H1 (cell line): ENCODE measurements at regions of chr15 and their contacts with region 1.

Region 1: DNA sequence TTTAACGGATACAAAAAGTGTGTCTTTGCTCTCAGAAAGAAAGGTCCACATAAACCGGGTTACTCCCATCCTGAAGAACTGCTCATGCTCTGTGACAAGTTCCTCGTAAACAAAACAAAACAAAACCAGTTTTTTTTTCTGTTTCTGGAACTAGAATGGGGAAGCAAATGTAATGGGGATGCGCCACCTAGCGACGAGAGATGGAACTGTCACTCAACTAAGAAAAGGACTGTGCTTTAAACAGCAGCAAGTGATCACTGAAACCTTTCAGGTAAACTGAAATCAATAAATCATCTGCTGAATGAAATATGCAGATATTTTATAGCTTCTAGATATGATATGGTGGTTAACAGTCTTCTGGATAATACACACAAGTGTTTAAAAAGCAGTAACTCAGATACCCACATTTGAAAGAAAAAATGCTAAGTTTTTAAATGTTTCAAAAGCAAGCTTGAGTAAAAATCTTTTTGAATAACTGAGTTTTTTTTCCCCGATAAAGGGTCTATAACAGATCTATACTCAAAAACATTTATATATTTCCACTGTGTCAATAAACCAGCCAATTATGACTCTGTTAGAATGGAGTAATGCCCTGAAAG is 10.9 kb downstream of the TM2D3 start:
- DNase-seq: peak in 1 of 2 experiments; percentile 85
- H3K4me3 ChIP-seq: no peak overlapping the region
- H3K27ac ChIP-seq: no peak overlapping the region
- H3K4me1 ChIP-seq: no peaks in the 10 kb centered on the region
- H3K27me3 ChIP-seq: no peaks in the 10 kb centered on the region
- CTCF ChIP-seq: peak in 2 of 3 experiments; percentile 75 to 79; a peak in 3 of 4 replicates
- EP300 ChIP-seq: no peak
- POLR2A ChIP-seq: no peak
- RAD21 ChIP-seq: peak; percentile 89 to 92

Region 2: DNA sequence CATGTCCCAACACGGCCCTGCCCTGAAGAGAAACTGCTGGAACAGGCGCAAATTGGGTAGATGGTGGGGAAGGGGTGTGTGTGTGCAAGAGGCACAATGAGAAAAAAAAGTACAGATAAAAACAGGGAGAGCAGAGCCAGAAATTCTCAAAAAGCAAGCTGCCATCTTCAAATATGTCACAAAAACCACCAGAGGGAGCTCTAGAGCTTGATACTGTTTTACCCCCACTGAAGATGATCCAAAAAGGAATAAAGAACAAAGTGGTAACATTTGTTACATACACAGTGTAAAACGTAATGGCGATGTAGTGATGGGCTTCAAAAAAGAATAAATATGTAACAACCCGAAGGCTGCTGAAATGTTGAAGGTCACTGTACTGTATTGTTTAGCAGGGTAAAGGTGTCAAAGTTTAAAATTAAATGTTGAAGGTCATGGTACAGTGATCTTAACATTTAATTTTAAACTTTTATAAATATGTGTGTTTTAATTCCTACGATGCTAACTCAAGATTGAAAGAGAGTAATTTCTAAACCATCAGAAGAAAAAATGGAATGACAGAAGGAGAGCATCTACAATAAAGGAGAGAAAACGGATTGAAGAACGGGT is 352.3 kb before region 1 on chr15:
- CTCF ChIA-PET with region 1: interaction called, 18 read pairs
- POLR2A ChIA-PET with region 1: no interaction called
- DNase-seq: no peak
- H3K4me3 ChIP-seq: no peak overlapping the region
- H3K27ac ChIP-seq: no peak overlapping the region
- H3K4me1 ChIP-seq: peaks cover 3 to 5% (median 4%) of the 10 kb centered on the region in 4 experiments; a peak in 4 of 7 replicates
- H3K27me3 ChIP-seq: no peaks in the 10 kb centered on the region
- CTCF ChIP-seq: peak in 2 of 3 experiments; percentile 51 to 55; a peak in 2 of 4 replicates
- EP300 ChIP-seq: no peak
- POLR2A ChIP-seq: no peak
- RAD21 ChIP-seq: peak; percentile 61 to 62

Region 3: GRCh38 chr15:101307048-101307896 is 334.0 kb before region 1 on chr15:
- CTCF ChIA-PET with region 1: interaction called, 69 read pairs
- POLR2A ChIA-PET with region 1: no interaction called
- DNase-seq: peak in 1 of 2 experiments; percentile 39
- H3K4me3 ChIP-seq: no peak overlapping the region
- H3K27ac ChIP-seq: no peak overlapping the region
- H3K4me1 ChIP-seq: no peaks in the 10 kb centered on the region
- H3K27me3 ChIP-seq: no peaks in the 10 kb centered on the region
- CTCF ChIP-seq: no peak
- EP300 ChIP-seq: no peak
- POLR2A ChIP-seq: no peak
- RAD21 ChIP-seq: no peak

Region 4: DNA sequence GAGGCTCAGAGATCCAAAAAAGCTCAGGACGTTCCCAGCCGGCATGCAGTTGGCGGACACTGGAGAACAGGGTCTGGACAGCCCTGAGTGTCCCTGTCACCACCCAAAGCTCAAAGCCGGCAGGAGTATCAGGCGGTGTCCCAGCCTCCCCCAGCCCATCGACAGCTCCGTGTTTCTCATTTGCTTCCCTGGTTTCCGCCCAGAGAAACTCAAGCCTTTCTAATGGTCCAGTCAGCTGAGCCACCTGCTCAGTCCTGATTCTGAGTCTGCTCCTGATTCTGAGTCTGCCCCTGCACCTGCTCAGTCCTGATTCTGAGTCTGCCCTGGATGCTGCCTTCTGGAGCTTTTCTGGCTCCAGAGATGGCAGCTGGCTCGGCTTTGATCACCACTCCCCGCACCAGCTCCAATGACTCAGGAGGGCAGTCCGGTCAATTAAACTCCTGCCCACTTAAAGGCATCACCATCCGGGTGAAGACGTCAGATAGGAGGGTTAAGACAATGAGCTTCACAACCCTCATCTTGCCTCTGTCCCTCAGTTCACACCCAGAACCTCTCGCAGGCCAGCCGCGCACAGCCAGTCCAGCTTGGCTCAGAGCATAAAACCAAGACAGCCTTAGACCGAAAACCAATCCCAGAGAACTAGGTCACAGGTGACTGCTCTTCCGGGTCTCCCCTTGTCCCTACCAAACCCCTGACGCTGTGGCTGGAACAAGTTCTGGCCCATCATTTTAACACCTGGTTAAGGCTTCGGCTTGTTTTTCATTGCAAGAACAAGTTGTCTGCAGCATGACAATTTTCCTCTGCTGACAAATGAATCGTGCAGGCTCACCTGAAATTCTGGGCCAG is 158.5 kb before region 1 on chr15:
- CTCF ChIA-PET with region 1: no interaction called
- POLR2A ChIA-PET with region 1: no interaction called
- DNase-seq: no peak
- H3K4me3 ChIP-seq: no peak overlapping the region
- H3K27ac ChIP-seq: no peak overlapping the region
- H3K4me1 ChIP-seq: peaks cover 0 to 6% (median 0%) of the 10 kb centered on the region in 4 experiments; a peak in 3 of 7 replicates
- H3K27me3 ChIP-seq: peaks cover 0 to 16% (median 8%) of the 10 kb centered on the region in 4 experiments; a peak in 6 of 7 replicates
- CTCF ChIP-seq: no peak
- EP300 ChIP-seq: no peak
- POLR2A ChIP-seq: no peak
- RAD21 ChIP-seq: no peak

Region 5: DNA sequence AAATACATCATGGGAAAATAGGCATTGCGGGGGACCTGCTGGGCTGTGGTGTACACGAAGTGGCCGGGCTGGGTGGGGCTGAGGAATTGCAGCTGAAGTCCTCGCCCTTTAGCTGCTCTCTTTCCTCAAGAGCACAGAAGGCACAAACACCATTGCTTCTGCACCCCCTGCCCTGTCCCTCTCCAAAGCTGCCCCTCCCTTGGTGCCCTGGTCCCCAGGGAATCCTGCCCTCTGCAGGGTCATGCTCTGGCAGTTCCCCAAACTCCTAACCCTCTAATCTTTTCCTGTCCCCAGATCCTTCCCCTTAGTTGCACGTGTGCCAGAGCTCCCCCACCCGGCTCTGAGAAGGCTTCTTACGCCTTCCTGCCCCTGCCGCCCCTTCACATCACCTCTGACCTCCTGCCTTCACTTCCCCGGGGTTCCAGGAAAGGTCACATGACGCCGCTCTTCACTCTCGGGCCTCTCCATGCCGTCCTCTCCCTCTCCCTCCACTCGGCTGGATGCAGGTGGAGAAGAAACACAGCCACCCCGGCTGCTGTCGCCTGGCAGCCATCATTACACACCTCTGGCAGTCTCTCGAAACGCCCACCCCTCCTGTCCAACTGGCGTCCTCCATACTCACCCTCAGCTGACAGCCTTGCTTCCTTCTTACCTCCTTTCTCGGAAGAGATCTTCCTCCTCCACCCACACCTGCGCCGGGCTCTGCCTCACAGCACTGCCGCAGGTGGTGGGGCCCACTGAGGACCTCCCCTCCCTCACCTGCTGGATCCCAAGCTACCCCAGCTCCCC is 144.9 kb before region 1 on chr15:
- CTCF ChIA-PET with region 1: interaction called, 11 read pairs
- POLR2A ChIA-PET with region 1: no interaction called
- DNase-seq: peak in 1 of 2 experiments; percentile 47
- H3K4me3 ChIP-seq: no peak overlapping the region
- H3K27ac ChIP-seq: no peak overlapping the region
- H3K4me1 ChIP-seq: peaks cover 0 to 24% (median 13%) of the 10 kb centered on the region in 4 experiments; a peak in 5 of 7 replicates
- H3K27me3 ChIP-seq: peaks cover 0 to 6% (median 2%) of the 10 kb centered on the region in 4 experiments; a peak in 4 of 7 replicates
- CTCF ChIP-seq: no peak
- EP300 ChIP-seq: no peak
- POLR2A ChIP-seq: no peak
- RAD21 ChIP-seq: no peak

Region 6: GRCh38 chr15:101597360-101597928 is 43.8 kb before region 1 on chr15:
- CTCF ChIA-PET with region 1: no interaction called
- POLR2A ChIA-PET with region 1: no interaction called
- DNase-seq: no peak
- H3K4me3 ChIP-seq: no peak overlapping the region
- H3K27ac ChIP-seq: no peak overlapping the region
- H3K4me1 ChIP-seq: peaks cover 0 to 3% (median 0%) of the 10 kb centered on the region in 4 experiments; a peak in 2 of 7 replicates
- H3K27me3 ChIP-seq: peaks cover 0 to 2% (median 0%) of the 10 kb centered on the region in 4 experiments; a peak in 1 of 7 replicates
- CTCF ChIP-seq: no peak
- EP300 ChIP-seq: no peak
- POLR2A ChIP-seq: no peak
- RAD21 ChIP-seq: no peak

Region 7: DNA sequence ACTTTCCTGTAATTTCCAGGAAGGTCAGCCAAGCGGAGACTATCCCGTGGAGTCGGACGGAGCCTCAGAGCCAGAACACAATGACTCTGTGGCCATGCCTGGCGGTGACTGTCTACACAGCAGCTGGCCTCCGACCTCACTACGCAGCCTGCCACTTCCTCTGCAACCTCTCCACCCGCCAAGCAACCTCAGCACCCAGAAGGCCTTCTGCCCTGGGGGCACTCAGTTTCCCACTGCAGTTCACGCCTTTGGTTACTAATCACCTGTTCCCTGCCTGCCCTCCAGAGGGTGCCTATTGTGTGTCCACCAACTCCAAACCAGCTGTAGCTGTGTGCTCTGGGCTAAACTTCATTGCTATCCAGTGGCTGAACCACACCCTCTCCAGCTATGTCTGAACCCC is 33.1 kb before region 1 on chr15:
- CTCF ChIA-PET with region 1: interaction called, 70 read pairs
- POLR2A ChIA-PET with region 1: no interaction called
- DNase-seq: no peak
- H3K4me3 ChIP-seq: no peak overlapping the region
- H3K27ac ChIP-seq: no peak overlapping the region
- H3K4me1 ChIP-seq: no peaks in the 10 kb centered on the region
- H3K27me3 ChIP-seq: no peaks in the 10 kb centered on the region
- CTCF ChIP-seq: peak in 2 of 3 experiments; percentile 1 to 14; a peak in 1 of 4 replicates
- EP300 ChIP-seq: no peak
- POLR2A ChIP-seq: no peak
- RAD21 ChIP-seq: peak; percentile 24 to 32; a peak in 1 of 4 replicates

Region 8: GRCh38 chr15:101652098-101652782 is 11.0 kb after region 1 on chr15 and contains the start of gene TM2D3:
- CTCF ChIA-PET with region 1: interaction called, 27 read pairs
- POLR2A ChIA-PET with region 1: interaction called, 3 read pairs
- DNase-seq: peak; percentile 65 to 94
- H3K4me3 ChIP-seq: peak within 1 kb of the TSS; percentile 87 to 98 (median 95)
- H3K27ac ChIP-seq: peak within 1 kb of the TSS; percentile 46; the same call in 1 of the 2 replicates
- H3K4me1 ChIP-seq: peaks cover 0 to 3% (median 0%) of the 10 kb centered on the region in 4 experiments; a peak in 2 of 7 replicates
- H3K27me3 ChIP-seq: no peaks in the 10 kb centered on the region; a peak in 1 of 7 replicates
- CTCF ChIP-seq: peak; percentile 77 to 79 (median 78)
- EP300 ChIP-seq: no peak
- POLR2A ChIP-seq: peak in 1 of 2 experiments; percentile 75; a peak in 2 of 3 replicates
- RAD21 ChIP-seq: peak; percentile 53 to 66
- total RNA-seq, gene TM2D3: 24.2 and 28.0 TPM in 2 replicates